ENCODE measurements at regions of chr4 and their contacts with region 1.

Region 1: DNA sequence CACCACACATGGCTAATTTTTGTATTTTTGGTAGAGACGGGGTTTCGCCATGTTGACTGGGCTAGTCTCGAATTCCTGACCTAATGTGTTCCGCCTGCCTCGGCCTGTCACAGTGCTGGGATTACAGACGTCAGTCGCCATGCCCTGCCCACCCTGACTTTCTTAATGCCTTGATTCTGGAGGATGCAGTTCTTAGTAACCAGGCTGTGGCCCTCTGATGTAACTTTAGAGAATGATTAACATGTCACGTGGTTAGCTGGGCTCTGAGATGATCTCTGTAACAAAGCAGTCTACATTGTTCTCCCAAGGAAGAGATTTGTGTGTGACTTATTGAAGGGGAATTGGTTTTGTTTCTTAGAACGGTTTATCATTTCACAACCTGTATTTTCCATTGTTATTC is 30.6 kb downstream of the ANK2 start:
- DNase-seq: peak; percentile 55 to 62
- H3K4me3 ChIP-seq: no peak overlapping the region
- H3K4me3 Mint-ChIP-seq: peak overlapping the region; percentile 41
- H3K27ac Mint-ChIP-seq: peak overlapping the region; percentile 27
- H3K4me1 ChIP-seq: peaks cover 9% of the 10 kb centered on the region
- H3K4me1 Mint-ChIP-seq: peaks cover 11% of the 10 kb centered on the region
- H3K27me3 ChIP-seq: no peaks in the 10 kb centered on the region
- H3K27me3 Mint-ChIP-seq: no peaks in the 10 kb centered on the region
- CTCF ChIP-seq: no peak

Region 2: DNA sequence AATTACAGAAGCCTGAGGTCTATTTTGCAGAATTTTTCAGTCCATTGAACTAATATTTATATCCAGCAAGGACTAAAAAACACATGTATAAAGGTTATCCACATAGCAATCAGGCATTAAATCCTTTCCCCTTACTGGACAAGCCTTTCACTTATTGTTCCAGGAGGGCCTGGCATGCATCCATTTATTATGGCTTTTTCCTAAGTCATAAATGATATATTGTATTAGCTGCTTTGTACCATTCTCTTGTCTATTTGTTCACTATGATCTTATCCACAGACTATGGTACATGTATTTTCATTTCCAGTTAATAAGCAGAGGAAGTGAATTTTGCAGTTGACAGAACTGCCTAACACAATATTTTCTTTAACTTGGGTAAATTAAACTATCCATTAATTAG is 136.0 kb before region 1 on chr4:
- CTCF ChIA-PET with region 1: no interaction called
- POLR2A ChIA-PET with region 1: no interaction called
- intact Hi-C with region 1: loop called (anchors 2 kb)
- DNase-seq: no peak
- H3K4me3 ChIP-seq: no peak overlapping the region
- H3K4me3 Mint-ChIP-seq: no peak overlapping the region
- H3K27ac Mint-ChIP-seq: no peak overlapping the region
- H3K4me1 ChIP-seq: 0 out of 2 replicates have a peak, but pooled peaks cover 2% of the 10 kb centered on the region
- H3K4me1 Mint-ChIP-seq: peaks cover 7% of the 10 kb centered on the region
- H3K27me3 ChIP-seq: no peaks in the 10 kb centered on the region
- H3K27me3 Mint-ChIP-seq: no peaks in the 10 kb centered on the region
- CTCF ChIP-seq: no peak